Heart left ventricle (tissue), 16 donors: ENCODE measurements at regions of chr17 and their contacts with region 1.

Region 1: GRCh38 chr17:65455972-65456343 is 105.5 kb downstream of the AXIN2 start:
- DNase-seq: peak in 4 of 5 donors; percentile 15 to 45 (median 34)
- ATAC-seq: peak; percentile 80 to 90 (median 87)
- H3K4me3 ChIP-seq: peak overlapping the region in 2 of 12 donors; percentile 7 to 27
- H3K27ac ChIP-seq: peak overlapping the region in 8 of 12 donors; percentile 11 to 75 (median 62)
- H3K4me1 ChIP-seq: peaks cover 0 to 19% (median 5%) of the 10 kb centered on the region in 12 donors
- H3K27me3 ChIP-seq: peaks cover 0 to 2% (median 0%) of the 10 kb centered on the region in 9 donors
- CTCF ChIP-seq: peak in 11 of 12 donors; percentile 8 to 57 (median 44)
- POLR2A ChIP-seq: no peak

Region 2: GRCh38 chr17:65794572-65794971 is 338.6 kb after region 1 on chr17:
- intact Hi-C with region 1: loop called in 4 of 10 experiments (anchors 5 to 10 kb)
- DNase-seq: no peak
- ATAC-seq: no peak
- H3K4me3 ChIP-seq: no peak overlapping the region
- H3K27ac ChIP-seq: no peak overlapping the region
- H3K4me1 ChIP-seq: no peaks in the 10 kb centered on the region
- H3K27me3 ChIP-seq: no peaks in the 10 kb centered on the region
- CTCF ChIP-seq: peak in 10 of 12 donors; percentile 13 to 48 (median 32)
- POLR2A ChIP-seq: no peak